Tibial artery (tissue), 4 donors: ENCODE measurements at regions of chr14 and their contacts with region 1.

Region 1: GRCh38 chr14:52961060-52961639 is 10.3 kb upstream of the FERMT2 start:
- DNase-seq: peak; percentile 49 to 66
- H3K4me3 ChIP-seq: no peak overlapping the region
- H3K27ac ChIP-seq: peak overlapping the region; percentile 30 to 51
- H3K4me1 ChIP-seq: peaks cover 0 to 10% (median 3%) of the 10 kb centered on the region in 4 donors
- H3K27me3 ChIP-seq: no peaks in the 10 kb centered on the region
- CTCF ChIP-seq: peak; percentile 72 to 84

Region 2: DNA sequence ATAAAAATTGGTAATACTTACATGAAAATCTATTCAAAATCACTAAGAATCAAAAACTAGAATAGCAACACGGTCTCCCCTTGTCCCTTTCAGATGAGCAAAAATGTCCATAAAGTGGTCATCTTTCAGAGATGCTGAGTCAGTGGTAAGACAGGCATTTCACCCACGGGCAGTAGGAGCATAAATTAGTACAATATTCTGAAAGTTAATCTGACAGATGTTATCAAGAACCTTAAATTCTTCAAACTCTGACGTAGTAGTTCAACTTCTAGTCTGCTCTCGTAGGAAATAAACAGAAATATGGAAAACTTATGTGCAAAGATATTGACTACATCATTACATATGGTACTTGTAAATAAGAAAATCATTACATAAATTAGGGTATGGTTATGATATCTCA is 136.6 kb before region 1 on chr14:
- intact Hi-C with region 1: loop called (anchors 1 kb)
- DNase-seq: no peak
- H3K4me3 ChIP-seq: no peak overlapping the region
- H3K27ac ChIP-seq: no peak overlapping the region
- H3K4me1 ChIP-seq: peaks cover 0 to 13% (median 0%) of the 10 kb centered on the region in 4 donors
- H3K27me3 ChIP-seq: no peaks in the 10 kb centered on the region
- CTCF ChIP-seq: no peak